ENCODE measurements at regions of chr21 and their contacts with region 1.

Region 1: DNA sequence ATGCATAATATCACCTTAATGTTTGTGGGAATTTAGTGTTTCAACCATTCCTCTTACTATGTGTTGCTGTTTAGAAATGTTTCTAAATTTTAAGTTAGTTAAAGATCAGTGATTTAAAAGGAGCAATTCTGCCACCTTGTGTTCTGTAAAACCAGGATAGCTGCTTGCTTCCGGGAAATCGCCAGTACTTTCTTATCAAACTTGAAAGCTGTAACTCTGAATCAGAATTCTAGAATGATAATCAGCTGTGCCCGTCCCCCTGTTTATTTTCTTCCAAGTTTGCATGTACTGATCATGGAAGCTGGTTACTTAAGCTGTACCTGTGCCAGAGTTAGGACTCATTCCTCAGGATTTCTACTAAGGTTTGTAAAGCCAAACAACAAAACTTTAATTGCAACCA is 656.4 kb downstream of the LTN1 start:
- DNase-seq: peak; percentile 22
- H3K4me3 ChIP-seq: peak overlapping the region in 1 of 2 experiments; percentile 3; a peak in 1 of 4 replicates
- H3K27ac ChIP-seq: peak overlapping the region; percentile 6 to 85; a peak in 3 of 4 replicates
- H3K4me1 ChIP-seq: peaks cover 0 to 17% of the 10 kb centered on the region in 2 experiments; a peak in 3 of 4 replicates
- H3K27me3 ChIP-seq: no peaks in the 10 kb centered on the region
- CTCF ChIP-seq: peak; percentile 76
- EP300 ChIP-seq: peak; percentile 40 to 63; a peak in 2 of 4 replicates
- RAD21 ChIP-seq: peak; percentile 86

Region 2: GRCh38 chr21:26842976-26843932 is 1493.1 kb before region 1 on chr21:
- CTCF ChIA-PET with region 1: interaction called, 18 read pairs
- POLR2A ChIA-PET with region 1: no interaction called
- DNase-seq: peak; percentile 72
- H3K4me3 ChIP-seq: peak overlapping the region; percentile 89 to 91
- H3K27ac ChIP-seq: peak overlapping the region; percentile 78 to 85
- H3K4me1 ChIP-seq: peaks cover 25 to 29% of the 10 kb centered on the region in 2 experiments; a peak in 3 of 4 replicates
- H3K27me3 ChIP-seq: no peaks in the 10 kb centered on the region
- CTCF ChIP-seq: peak; percentile 42
- EP300 ChIP-seq: peak in 1 of 2 experiments; percentile 18; a peak in 1 of 4 replicates
- RAD21 ChIP-seq: no peak

Region 3: GRCh38 chr21:26850108-26850643 is 1486.1 kb before region 1 on chr21:
- CTCF ChIA-PET with region 1: interaction called, 26 read pairs
- POLR2A ChIA-PET with region 1: no interaction called
- DNase-seq: peak; percentile 51
- H3K4me3 ChIP-seq: no peak overlapping the region; a peak in 1 of 4 replicates
- H3K27ac ChIP-seq: peak overlapping the region in 1 of 2 experiments; percentile 53; a peak in 1 of 4 replicates
- H3K4me1 ChIP-seq: peaks cover 0 to 14% of the 10 kb centered on the region in 2 experiments; a peak in 2 of 4 replicates
- H3K27me3 ChIP-seq: no peaks in the 10 kb centered on the region
- CTCF ChIP-seq: peak; percentile 74
- EP300 ChIP-seq: no peak
- RAD21 ChIP-seq: peak; percentile 74

Region 4: DNA sequence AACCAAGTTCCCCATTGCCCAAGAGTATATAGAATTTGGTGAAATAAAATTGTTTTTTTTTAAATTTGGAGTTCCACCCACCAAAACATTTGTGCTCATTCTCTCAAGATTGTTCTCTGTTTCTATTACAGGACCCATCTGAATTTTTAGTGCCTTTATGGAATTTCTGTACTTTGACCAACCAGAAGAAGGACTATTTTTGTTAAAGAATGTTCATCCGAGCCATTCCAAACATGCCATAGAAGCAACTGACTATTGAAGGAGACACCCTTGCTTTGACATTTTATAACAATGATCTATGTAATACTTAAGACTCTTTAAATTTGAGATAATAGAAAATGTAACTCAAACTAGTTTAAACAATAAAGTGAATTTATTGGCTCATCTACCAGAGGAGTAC is 713.7 kb before region 1 on chr21:
- CTCF ChIA-PET with region 1: no interaction called
- POLR2A ChIA-PET with region 1: no interaction called
- DNase-seq: no peak
- H3K4me3 ChIP-seq: no peak overlapping the region
- H3K27ac ChIP-seq: no peak overlapping the region
- H3K4me1 ChIP-seq: no peaks in the 10 kb centered on the region; a peak in 1 of 4 replicates
- H3K27me3 ChIP-seq: no peaks in the 10 kb centered on the region
- CTCF ChIP-seq: no peak
- EP300 ChIP-seq: no peak
- RAD21 ChIP-seq: no peak

Region 5: GRCh38 chr21:27700974-27701614 is 635.2 kb before region 1 on chr21:
- CTCF ChIA-PET with region 1: interaction called, 40 read pairs
- POLR2A ChIA-PET with region 1: no interaction called
- DNase-seq: peak; percentile 59
- H3K4me3 ChIP-seq: peak overlapping the region in 1 of 2 experiments; percentile 42; a peak in 1 of 4 replicates
- H3K27ac ChIP-seq: peak overlapping the region in 1 of 2 experiments; percentile 44; a peak in 1 of 4 replicates
- H3K4me1 ChIP-seq: peaks cover 0 to 2% of the 10 kb centered on the region in 2 experiments; a peak in 2 of 4 replicates
- H3K27me3 ChIP-seq: no peaks in the 10 kb centered on the region
- CTCF ChIP-seq: peak; percentile 86
- EP300 ChIP-seq: no peak
- RAD21 ChIP-seq: peak; percentile 97

Region 6: GRCh38 chr21:28269173-28269572 is 67.1 kb before region 1 on chr21:
- CTCF ChIA-PET with region 1: interaction called, 15 read pairs
- POLR2A ChIA-PET with region 1: interaction called, 3 read pairs
- DNase-seq: peak; percentile 53
- H3K4me3 ChIP-seq: no peak overlapping the region; a peak in 1 of 4 replicates
- H3K27ac ChIP-seq: peak overlapping the region; percentile 9 to 97; a peak in 3 of 4 replicates
- H3K4me1 ChIP-seq: peaks cover 0 to 8% of the 10 kb centered on the region in 2 experiments; a peak in 2 of 4 replicates
- H3K27me3 ChIP-seq: no peaks in the 10 kb centered on the region
- CTCF ChIP-seq: no peak
- EP300 ChIP-seq: peak; percentile 37 to 100; a peak in 3 of 4 replicates
- RAD21 ChIP-seq: peak; percentile 52; the same call in 1 of the 2 replicates

Region 7: DNA sequence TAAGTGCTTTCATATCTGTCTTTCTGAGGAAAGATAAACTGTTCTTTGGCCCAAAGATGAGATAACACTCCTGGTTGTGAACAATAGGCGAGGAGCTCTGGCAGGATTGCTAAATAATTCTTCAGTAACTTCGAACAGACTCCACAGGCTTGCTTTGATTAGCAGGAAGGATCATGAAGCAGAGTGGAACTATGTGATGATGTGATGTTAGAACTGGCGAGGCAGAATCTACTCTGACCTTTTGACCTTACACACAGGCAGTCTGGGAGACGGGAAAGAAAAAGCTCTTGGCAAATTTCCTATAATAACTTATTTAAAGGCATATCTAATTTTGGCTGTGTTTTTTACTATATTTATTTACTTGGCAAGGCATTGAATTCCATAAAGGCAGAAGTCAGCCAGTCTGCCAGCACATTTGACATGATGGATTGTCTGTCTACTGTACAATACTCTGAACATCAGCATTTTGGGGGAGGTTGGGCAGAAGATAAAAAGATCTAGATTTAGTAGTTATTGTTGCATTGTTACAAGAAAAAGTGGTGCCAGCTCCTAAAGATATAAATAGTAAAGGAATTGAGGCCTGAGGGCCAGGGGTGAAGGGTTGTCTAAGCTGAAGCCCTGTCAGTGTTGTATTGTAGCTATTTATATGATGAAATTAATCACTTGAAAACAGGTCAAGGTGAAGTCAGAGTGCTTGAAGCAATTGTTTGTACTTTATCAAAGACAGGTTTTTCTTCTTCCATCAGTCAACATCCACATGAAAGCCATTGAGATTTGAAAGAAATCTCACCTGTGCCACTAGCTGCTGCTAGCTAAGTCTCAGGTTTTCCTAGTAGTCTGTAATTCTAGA is 52.4 kb before region 1 on chr21:
- CTCF ChIA-PET with region 1: interaction called, 13 read pairs
- POLR2A ChIA-PET with region 1: no interaction called
- DNase-seq: peak; percentile 22
- H3K4me3 ChIP-seq: no peak overlapping the region
- H3K27ac ChIP-seq: peak overlapping the region; percentile 75 to 96
- H3K4me1 ChIP-seq: peaks cover 0 to 16% of the 10 kb centered on the region in 2 experiments; a peak in 2 of 4 replicates
- H3K27me3 ChIP-seq: no peaks in the 10 kb centered on the region
- CTCF ChIP-seq: no peak
- EP300 ChIP-seq: peak; percentile 61 to 72
- RAD21 ChIP-seq: no peak; the same call in 1 of the 2 replicates

Region 8: DNA sequence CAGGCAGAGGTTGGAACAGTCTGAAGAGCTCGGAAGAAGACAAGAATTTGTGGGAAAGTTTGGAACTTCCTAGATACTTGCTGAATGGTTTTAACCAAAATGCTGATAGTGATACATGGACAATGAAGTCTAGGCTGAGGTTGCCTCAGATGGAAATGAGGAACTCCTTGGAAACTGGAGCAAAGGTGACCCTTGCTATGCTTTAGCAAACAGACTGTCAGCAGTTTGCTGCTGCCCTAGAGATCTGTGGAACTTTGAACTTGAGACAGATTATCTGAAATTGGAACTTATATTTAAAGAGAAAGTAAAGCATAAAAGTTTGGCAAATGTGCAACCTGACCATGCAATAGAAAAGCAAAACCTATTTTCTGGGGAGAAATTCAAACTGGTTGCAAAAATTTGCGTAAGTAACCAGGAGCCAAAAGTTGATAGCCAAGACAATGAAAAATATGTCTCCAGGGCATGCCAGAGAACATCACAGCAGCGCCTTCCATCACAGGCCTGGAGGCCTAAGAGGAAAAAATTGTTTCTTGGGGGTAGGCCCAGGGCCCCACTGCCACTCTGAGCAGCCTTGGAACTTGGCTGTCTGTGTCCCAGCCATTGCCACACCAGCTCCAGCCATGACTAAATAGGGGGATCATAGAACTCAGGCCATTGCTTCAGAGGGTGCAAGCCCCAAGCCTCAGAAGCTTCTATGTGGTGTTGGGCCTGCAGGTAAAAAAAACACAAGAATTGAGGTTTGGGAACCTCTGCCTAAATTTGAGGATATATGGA is 18.9 kb before region 1 on chr21:
- CTCF ChIA-PET with region 1: no interaction called
- POLR2A ChIA-PET with region 1: no interaction called
- DNase-seq: no peak
- H3K4me3 ChIP-seq: no peak overlapping the region
- H3K27ac ChIP-seq: no peak overlapping the region
- H3K4me1 ChIP-seq: no peaks in the 10 kb centered on the region
- H3K27me3 ChIP-seq: no peaks in the 10 kb centered on the region
- CTCF ChIP-seq: no peak
- EP300 ChIP-seq: no peak
- RAD21 ChIP-seq: no peak

Region 9: GRCh38 chr21:28522014-28522799 is 185.9 kb after region 1 on chr21:
- CTCF ChIA-PET with region 1: interaction called, 13 read pairs
- POLR2A ChIA-PET with region 1: no interaction called
- DNase-seq: peak; percentile 11
- H3K4me3 ChIP-seq: no peak overlapping the region
- H3K27ac ChIP-seq: peak overlapping the region in 1 of 2 experiments; percentile 76; a peak in 2 of 4 replicates
- H3K4me1 ChIP-seq: peaks cover 6 to 7% of the 10 kb centered on the region in 2 experiments; a peak in 3 of 4 replicates
- H3K27me3 ChIP-seq: no peaks in the 10 kb centered on the region
- CTCF ChIP-seq: peak; percentile 60
- EP300 ChIP-seq: no peak
- RAD21 ChIP-seq: peak; percentile 82

Region 10: GRCh38 chr21:28579986-28580550 is 243.8 kb after region 1 on chr21:
- CTCF ChIA-PET with region 1: no interaction called
- POLR2A ChIA-PET with region 1: no interaction called
- DNase-seq: no peak
- H3K4me3 ChIP-seq: no peak overlapping the region
- H3K27ac ChIP-seq: no peak overlapping the region
- H3K4me1 ChIP-seq: no peaks in the 10 kb centered on the region
- H3K27me3 ChIP-seq: no peaks in the 10 kb centered on the region
- CTCF ChIP-seq: no peak
- EP300 ChIP-seq: no peak
- RAD21 ChIP-seq: no peak

Measured in SK-N-SH (cell line).